ENCODE measurements at regions of chr9 and their contacts with region 1.

Region 1: GRCh38 chr9:14961372-14962068 is 51.3 kb upstream of the FREM1 start:
- DNase-seq: no peak
- ATAC-seq: no peak
- H3K4me3 ChIP-seq: no peak overlapping the region
- H3K27ac ChIP-seq: no peak overlapping the region
- H3K4me1 ChIP-seq: no peaks in the 10 kb centered on the region
- H3K27me3 ChIP-seq: no peaks in the 10 kb centered on the region
- CTCF ChIP-seq: no peak

Region 2: GRCh38 chr9:14806941-14807520 is 154.5 kb before region 1 on chr9:
- intact Hi-C with region 1: loop called in 1 of 2 experiments (anchors 10 kb)
- DNase-seq: no peak
- ATAC-seq: no peak
- H3K4me3 ChIP-seq: no peak overlapping the region
- H3K27ac ChIP-seq: no peak overlapping the region
- H3K4me1 ChIP-seq: no peaks in the 10 kb centered on the region
- H3K27me3 ChIP-seq: no peaks in the 10 kb centered on the region
- CTCF ChIP-seq: no peak

Measured in psoas muscle (tissue), 8 donors.